ENCODE measurements at regions of chr6 and their contacts with region 1.

Region 1: GRCh38 chr6:101477436-101477835 is 83.9 kb downstream of the GRIK2 start:
- DNase-seq: no peak
- ATAC-seq: no peak
- H3K4me3 ChIP-seq: no peak overlapping the region
- H3K4me3 Mint-ChIP-seq: no peak overlapping the region
- H3K27ac ChIP-seq: no peak overlapping the region
- H3K27ac Mint-ChIP-seq: no peak overlapping the region
- H3K4me1 ChIP-seq: no peaks in the 10 kb centered on the region
- H3K4me1 Mint-ChIP-seq: no peaks in the 10 kb centered on the region
- H3K27me3 ChIP-seq: no peaks in the 10 kb centered on the region
- H3K27me3 Mint-ChIP-seq: no peaks in the 10 kb centered on the region

Region 2: DNA sequence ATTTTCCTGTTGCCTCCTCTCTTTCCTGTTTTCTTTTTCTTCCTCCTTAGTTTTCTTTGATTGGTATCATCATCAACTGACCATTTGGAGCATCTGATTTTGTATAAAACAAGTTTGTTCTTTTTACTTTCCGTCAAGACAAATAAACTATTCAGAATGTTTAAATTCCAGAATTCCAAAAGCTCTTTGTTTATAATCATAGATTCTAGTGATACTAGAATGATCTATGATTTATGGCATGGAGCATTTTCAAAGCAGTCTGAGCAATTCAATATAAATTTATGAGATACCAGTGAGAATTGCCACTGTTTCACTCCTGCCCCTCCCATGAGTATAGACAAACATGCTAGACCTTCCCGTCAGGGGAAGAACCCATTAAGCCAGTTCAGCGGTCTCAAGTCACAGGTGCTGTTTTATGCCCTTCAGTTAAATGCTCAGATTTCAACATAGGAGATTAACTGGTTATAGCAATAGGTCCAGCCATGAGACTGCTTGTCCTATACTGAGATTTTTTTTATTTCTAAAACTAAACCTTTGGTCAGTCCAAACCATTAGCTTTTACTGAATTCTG is 23.2 kb before region 1 on chr6:
- CTCF ChIA-PET with region 1: no interaction called
- POLR2A ChIA-PET with region 1: interaction called in 1 of 2 experiments, 16 read pairs
- DNase-seq: no peak
- ATAC-seq: no peak
- H3K4me3 ChIP-seq: no peak overlapping the region
- H3K4me3 Mint-ChIP-seq: no peak overlapping the region
- H3K27ac ChIP-seq: no peak overlapping the region
- H3K27ac Mint-ChIP-seq: no peak overlapping the region
- H3K4me1 ChIP-seq: no peaks in the 10 kb centered on the region
- H3K4me1 Mint-ChIP-seq: no peaks in the 10 kb centered on the region
- H3K27me3 ChIP-seq: no peaks in the 10 kb centered on the region
- H3K27me3 Mint-ChIP-seq: no peaks in the 10 kb centered on the region